ENCODE measurements at regions of chr7 and their contacts with region 1.

Region 1: GRCh38 chr7:362402-363096 is 72.6 kb downstream of the FOXL3 start:
- DNase-seq: peak; percentile 58
- H3K4me3 ChIP-seq: peak overlapping the region in 1 of 3 experiments; percentile 44
- H3K27ac ChIP-seq: peak overlapping the region; percentile 59
- H3K4me1 ChIP-seq: peaks cover 28% of the 10 kb centered on the region
- H3K27me3 ChIP-seq: no peaks in the 10 kb centered on the region
- CTCF ChIP-seq: no peak
- POLR2A ChIP-seq: peak; percentile 62

Region 2: GRCh38 chr7:351681-352480 is 10.7 kb before region 1 on chr7:
- CTCF ChIA-PET with region 1: interaction called, 3 read pairs
- POLR2A ChIA-PET with region 1: no interaction called
- dilution Hi-C with region 1: no loop called
- intact Hi-C with region 1: loop called (anchors 1 kb)
- DNase-seq: no peak
- H3K4me3 ChIP-seq: no peak overlapping the region
- H3K27ac ChIP-seq: peak overlapping the region; percentile 19
- H3K4me1 ChIP-seq: peaks cover 23% of the 10 kb centered on the region
- H3K27me3 ChIP-seq: no peaks in the 10 kb centered on the region
- CTCF ChIP-seq: no peak
- POLR2A ChIP-seq: no peak